ENCODE measurements at regions of chr18 and their contacts with region 1.

Region 1: DNA sequence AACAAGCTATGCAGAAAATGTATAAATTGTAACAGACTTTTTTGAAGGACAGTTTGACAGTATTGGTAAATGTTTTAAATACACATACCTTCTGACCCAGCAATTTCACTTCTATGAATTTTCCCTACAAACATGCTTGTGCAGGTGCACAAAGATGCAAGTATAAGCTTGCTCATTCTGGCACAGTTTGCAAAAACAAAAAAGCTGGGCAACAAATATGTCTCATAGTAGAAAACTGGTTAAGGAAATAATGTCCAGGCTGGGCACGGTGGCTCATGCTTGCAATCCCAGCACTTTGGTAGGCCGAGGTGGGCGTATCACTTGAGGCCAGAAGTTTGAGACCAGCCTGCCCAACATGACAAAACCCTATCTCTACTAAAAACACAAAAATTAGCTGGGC is 96.9 kb upstream of the NEDD4L start:
- DNase-seq: no peak
- H3K4me3 ChIP-seq: no peak overlapping the region
- H3K27ac ChIP-seq: no peak overlapping the region
- H3K4me1 ChIP-seq: no peaks in the 10 kb centered on the region
- H3K27me3 ChIP-seq: peaks cover 0 to 7% of the 10 kb centered on the region in 2 experiments
- CTCF ChIP-seq: no peak
- POLR2A ChIP-seq: no peak

Region 2: DNA sequence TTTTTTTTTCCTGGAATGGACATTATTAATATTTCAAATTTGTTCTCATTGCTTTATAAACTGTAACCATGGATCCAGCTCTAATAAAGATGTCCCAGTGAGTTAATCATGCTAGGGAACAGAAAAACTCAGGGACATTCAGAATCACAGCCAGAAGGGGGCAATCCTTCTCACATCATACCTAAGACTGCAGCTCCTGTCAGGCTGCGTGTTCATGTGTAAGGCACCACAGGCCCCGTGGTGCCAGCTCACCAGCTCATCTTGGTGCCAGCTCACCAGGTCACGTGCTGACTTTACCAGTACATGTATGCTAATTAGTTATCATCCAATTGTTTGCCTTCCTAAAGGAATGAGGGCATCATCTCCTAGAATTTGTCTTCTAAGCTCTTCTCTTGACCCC is 12.2 kb after region 1 on chr18:
- CTCF ChIA-PET with region 1: interaction called, 15 read pairs
- POLR2A ChIA-PET with region 1: no interaction called
- dilution Hi-C with region 1: no loop called
- intact Hi-C with region 1: no loop called
- DNase-seq: peak; percentile 59
- H3K4me3 ChIP-seq: no peak overlapping the region
- H3K27ac ChIP-seq: no peak overlapping the region
- H3K4me1 ChIP-seq: peaks cover 3% of the 10 kb centered on the region
- H3K27me3 ChIP-seq: peaks cover 4 to 14% of the 10 kb centered on the region in 2 experiments
- CTCF ChIP-seq: peak; percentile 22 to 44
- POLR2A ChIP-seq: no peak

Region 3: GRCh38 chr18:58392324-58393000 is 445.3 kb after region 1 on chr18:
- CTCF ChIA-PET with region 1: no interaction called
- POLR2A ChIA-PET with region 1: no interaction called
- dilution Hi-C with region 1: no loop called
- intact Hi-C with region 1: no loop called
- DNase-seq: peak; percentile 51
- H3K4me3 ChIP-seq: no peak overlapping the region
- H3K27ac ChIP-seq: no peak overlapping the region
- H3K4me1 ChIP-seq: peaks cover 12% of the 10 kb centered on the region
- H3K27me3 ChIP-seq: no peaks in the 10 kb centered on the region
- CTCF ChIP-seq: no peak
- POLR2A ChIP-seq: no peak